HEK293 (cell line): ENCODE measurements at regions of chr17 and their contacts with region 1.

Region 1: GRCh38 chr17:29111816-29112499 is 68.2 kb downstream of the MYO18A start:
- H3K4me3 ChIP-seq: no peak overlapping the region
- H3K27ac ChIP-seq: no peak overlapping the region
- H3K4me1 ChIP-seq: no peaks in the 10 kb centered on the region
- CTCF ChIP-seq: peak; percentile 93

Region 2: DNA sequence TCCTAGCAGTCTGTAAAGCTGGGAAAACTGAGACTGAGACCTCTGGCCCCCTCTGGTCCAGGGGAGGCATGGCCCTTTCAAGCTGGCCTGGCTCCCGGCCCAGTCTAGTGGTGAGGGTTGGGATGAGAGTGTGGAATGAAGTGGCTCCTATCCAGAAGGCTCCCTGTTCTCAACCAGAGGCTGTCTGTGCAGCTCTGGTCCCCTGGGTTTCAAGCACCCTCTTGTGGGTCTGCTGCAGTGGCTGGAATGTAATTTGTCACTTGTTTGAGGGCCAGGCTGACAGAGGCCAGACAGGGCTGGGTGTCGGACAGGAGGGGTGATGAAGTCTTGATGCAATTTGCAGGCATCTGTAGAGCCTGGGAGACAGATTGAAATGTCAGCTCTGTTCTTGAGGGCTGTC is 138.5 kb before region 1 on chr17:
- CTCF ChIA-PET with region 1: interaction called, 119 read pairs
- POLR2A ChIA-PET with region 1: no interaction called
- H3K4me3 ChIP-seq: no peak overlapping the region
- H3K27ac ChIP-seq: no peak overlapping the region
- H3K4me1 ChIP-seq: no peaks in the 10 kb centered on the region
- CTCF ChIP-seq: no peak

Region 3: DNA sequence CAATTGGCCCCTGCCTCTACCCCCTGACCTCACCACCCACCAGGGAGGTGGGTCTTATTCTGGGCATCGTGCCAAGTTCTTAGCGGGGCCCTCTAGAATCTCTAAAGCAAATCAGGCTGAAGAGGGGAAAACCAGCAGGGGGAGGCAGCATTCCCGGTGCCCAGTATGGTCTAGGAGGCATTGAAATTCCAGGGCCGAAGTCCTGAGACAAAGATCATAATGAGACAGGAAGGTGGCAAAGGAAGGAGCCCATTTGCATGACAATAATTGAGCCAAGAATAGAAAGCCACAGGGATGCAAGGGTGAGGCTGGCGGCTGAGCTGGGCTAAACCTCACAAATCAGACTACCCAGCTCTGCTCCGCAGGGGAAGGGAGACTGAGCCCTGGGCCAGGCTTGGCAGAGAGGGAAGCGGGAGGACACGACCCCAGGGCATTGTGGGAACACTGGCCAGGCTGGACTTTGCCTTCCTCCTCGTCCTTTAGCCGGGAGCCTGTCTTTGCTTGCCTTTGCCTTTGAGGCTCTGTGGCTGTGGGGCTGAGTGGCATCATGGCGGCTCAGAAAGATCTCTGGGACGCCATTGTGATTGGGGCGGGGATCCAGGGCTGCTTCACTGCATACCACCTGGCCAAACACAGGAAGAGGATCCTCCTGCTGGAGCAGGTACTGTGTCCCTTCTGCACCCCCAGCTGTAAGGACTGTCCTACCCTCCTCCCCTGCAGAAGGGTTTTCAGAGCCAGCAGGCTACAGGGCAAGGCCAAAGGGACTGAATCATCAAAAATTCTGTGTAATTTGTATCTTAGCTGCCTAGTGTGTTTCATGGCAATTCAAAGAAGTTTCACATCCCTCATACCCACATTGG is 69.0 kb before region 1 on chr17 and contains the start of gene PIPOX:
- CTCF ChIA-PET with region 1: interaction called, 25 read pairs
- POLR2A ChIA-PET with region 1: no interaction called
- H3K4me3 ChIP-seq: no peak within 1 kb of the TSS
- H3K27ac ChIP-seq: no peak within 1 kb of the TSS
- H3K4me1 ChIP-seq: peaks cover 5% of the 10 kb centered on the region
- CTCF ChIP-seq: peak; percentile 38

Region 4: GRCh38 chr17:29048440-29049368 is 63.3 kb before region 1 on chr17:
- CTCF ChIA-PET with region 1: interaction called, 22 read pairs
- POLR2A ChIA-PET with region 1: no interaction called
- H3K4me3 ChIP-seq: no peak overlapping the region
- H3K27ac ChIP-seq: no peak overlapping the region
- H3K4me1 ChIP-seq: peaks cover 8% of the 10 kb centered on the region
- CTCF ChIP-seq: no peak

Region 5: DNA sequence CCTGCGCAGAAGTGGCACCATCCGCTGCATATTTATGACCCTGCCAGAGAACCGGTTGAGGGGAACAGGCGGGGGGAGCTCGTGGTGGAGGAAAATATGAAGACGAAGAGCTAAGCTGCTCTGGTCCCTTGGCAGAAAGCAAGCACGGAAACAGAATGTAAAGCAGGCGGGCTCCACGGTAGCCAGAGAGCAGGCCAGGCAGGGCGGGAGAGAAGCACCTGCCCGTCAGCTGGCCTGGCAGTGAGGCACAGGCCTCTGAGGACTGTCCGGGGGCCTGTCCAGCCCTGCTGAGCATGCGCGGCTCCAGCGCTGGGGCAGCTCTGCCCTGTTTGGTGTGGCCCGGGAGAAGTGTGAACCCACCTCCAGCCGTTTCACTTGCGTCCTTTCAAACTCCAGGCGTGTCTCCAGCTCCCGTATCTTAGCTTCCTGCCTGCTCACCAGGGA is 22.3 kb before region 1 on chr17:
- CTCF ChIA-PET with region 1: interaction called, 20 read pairs
- POLR2A ChIA-PET with region 1: interaction called, 3 read pairs
- H3K4me3 ChIP-seq: no peak overlapping the region
- H3K27ac ChIP-seq: no peak overlapping the region
- H3K4me1 ChIP-seq: peaks cover 7% of the 10 kb centered on the region
- CTCF ChIP-seq: no peak

Region 6: DNA sequence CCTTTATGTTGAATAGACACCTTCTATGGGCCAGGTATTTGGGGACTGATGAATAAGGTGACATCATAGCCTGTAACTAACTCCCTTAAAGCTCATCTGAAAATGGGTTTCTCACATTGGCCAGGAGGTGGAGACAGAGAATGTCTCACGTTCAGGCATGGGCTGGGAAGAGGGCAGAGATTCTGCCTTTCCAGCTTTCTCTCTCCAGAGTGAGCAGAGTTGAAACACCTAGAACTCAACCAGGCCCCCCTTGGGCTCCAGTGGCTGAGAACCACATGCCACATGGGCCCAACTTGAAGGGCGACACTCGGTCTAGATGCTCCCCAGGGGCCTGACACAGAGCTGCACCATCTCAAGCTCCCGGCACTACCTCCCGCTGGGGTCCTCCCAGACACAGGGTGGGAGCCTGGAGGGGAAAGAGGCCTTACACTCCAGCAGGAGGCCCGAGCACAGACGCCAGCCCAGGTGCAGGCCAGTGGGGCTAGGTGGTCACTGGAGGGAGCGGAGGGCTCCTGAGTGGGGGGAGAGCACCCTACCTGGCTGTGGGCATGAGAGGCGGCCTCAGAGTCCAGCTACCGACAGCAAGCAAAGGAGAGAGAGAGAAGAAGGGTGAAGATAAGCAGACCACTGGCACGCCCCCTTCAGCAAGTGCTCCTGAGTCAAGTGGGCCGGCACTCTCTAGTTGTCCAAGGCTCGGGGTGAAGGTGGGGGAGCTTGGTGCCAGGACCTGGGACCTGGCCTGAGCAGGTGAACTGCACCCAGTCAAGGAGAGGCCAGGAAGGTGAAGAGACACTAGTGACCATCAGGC is 12.4 kb after region 1 on chr17:
- CTCF ChIA-PET with region 1: interaction called, 41 read pairs
- POLR2A ChIA-PET with region 1: no interaction called
- H3K4me3 ChIP-seq: no peak overlapping the region
- H3K27ac ChIP-seq: no peak overlapping the region
- H3K4me1 ChIP-seq: no peaks in the 10 kb centered on the region
- CTCF ChIP-seq: peak; percentile 69

Region 7: DNA sequence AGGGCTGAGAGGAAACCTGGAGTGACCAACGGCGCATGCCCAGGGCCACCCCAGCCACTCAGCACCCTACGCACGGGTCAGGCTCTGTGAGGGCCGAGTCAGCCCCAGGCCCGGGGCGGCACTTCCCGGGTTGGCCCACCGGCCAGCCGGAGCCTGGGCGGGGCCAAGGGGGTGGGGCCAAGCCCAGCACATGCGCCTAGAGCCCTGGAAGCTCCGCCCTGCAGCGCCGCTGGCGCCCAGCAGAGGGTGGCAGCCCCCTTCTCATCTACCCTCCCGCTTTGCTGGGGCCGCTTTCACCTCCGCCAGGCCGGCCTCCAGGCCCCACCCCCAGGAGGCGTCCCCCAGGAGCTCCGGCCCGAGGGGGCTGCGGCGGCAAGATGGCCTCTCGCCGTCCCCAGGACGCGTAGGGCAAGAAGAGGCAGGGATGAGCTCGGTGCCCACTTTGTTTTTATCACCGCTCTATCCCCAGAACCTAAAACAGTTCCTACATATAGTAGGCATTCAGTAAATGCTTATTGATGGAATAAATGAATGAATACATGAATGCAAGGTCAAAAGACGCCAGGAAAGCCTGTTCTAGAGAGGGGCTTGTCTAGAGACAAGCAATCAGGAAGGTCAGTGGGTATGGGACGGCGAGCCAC is 37.0 kb after region 1 on chr17:
- CTCF ChIA-PET with region 1: interaction called, 506 read pairs
- POLR2A ChIA-PET with region 1: interaction called, 5 read pairs
- H3K4me3 ChIP-seq: peak overlapping the region; percentile 44
- H3K27ac ChIP-seq: peak overlapping the region; percentile 48
- H3K4me1 ChIP-seq: peaks cover 10% of the 10 kb centered on the region
- CTCF ChIP-seq: peak; percentile 97

Region 8: GRCh38 chr17:29303386-29303785 is 191.4 kb after region 1 on chr17:
- CTCF ChIA-PET with region 1: no interaction called
- POLR2A ChIA-PET with region 1: no interaction called
- H3K4me3 ChIP-seq: no peak overlapping the region
- H3K27ac ChIP-seq: no peak overlapping the region
- H3K4me1 ChIP-seq: no peaks in the 10 kb centered on the region
- CTCF ChIP-seq: no peak